ENCODE measurements at regions of chr1 and their contacts with region 1.

Region 1: DNA sequence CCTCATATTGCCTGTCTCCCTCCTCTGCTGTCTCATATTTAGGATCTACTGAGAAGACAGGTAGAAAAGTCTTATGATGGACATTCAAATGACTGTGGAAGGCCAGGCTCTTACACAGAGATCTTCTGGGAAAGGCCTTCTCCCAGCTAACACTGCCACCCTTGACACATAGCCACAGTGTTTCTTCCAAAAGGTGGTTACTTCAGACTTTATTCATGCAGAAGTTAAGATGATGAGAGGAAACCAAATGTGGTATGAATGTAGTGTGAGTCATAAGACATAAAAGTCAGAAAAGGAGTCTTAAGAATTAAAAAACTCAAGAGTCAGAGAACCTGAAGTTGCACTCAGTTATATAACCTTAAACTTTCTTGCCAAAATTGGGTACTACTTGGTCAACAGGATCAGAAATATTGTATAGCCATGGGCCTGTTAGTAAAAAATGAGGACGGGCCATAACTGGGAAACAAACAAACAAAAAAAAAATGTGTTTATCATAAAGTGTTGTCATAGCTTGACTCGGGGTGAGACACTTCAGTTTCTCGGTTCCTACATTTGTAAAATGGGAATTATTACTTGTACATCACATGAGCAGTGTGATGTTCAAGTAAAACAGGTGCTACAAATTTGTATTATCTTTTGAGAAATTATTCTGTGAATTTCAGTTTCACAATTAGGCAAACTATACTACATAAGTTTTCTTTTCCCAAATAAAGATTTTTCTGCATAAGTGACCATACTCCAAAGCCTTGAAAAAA is 1.2 kb upstream of the DENND1B start:
- DNase-seq: no peak
- ATAC-seq: peak; percentile 46
- H3K4me3 ChIP-seq: no peak overlapping the region
- H3K27ac ChIP-seq: peak overlapping the region; percentile 62
- H3K4me1 ChIP-seq: peaks cover 30% of the 10 kb centered on the region
- H3K27me3 ChIP-seq: no peaks in the 10 kb centered on the region; a peak in 1 of 4 replicates
- CTCF ChIP-seq: no peak
- EP300 ChIP-seq: peak; percentile 39 to 83; a peak in 2 of 4 replicates
- POLR2A ChIP-seq: no peak
- RAD21 ChIP-seq: no peak

Region 2: GRCh38 chr1:197649188-197649587 is 127.3 kb before region 1 on chr1:
- CTCF ChIA-PET with region 1: no interaction called
- POLR2A ChIA-PET with region 1: no interaction called
- RAD21 ChIA-PET with region 1: no interaction called
- SMC1A ChIA-PET with region 1: no interaction called
- in situ Hi-C with region 1: no loop called
- intact Hi-C with region 1: no loop called
- DNase-seq: no peak
- ATAC-seq: no peak
- H3K4me3 ChIP-seq: no peak overlapping the region
- H3K27ac ChIP-seq: no peak overlapping the region
- H3K4me1 ChIP-seq: no peaks in the 10 kb centered on the region
- H3K27me3 ChIP-seq: no peaks in the 10 kb centered on the region
- CTCF ChIP-seq: no peak
- EP300 ChIP-seq: no peak
- POLR2A ChIP-seq: no peak
- RAD21 ChIP-seq: no peak

Region 3: GRCh38 chr1:197675583-197676208 is 100.8 kb before region 1 on chr1:
- CTCF ChIA-PET with region 1: no interaction called
- POLR2A ChIA-PET with region 1: no interaction called
- RAD21 ChIA-PET with region 1: no interaction called
- SMC1A ChIA-PET with region 1: no interaction called
- in situ Hi-C with region 1: no loop called
- intact Hi-C with region 1: no loop called
- DNase-seq: no peak
- ATAC-seq: peak; percentile 34
- H3K4me3 ChIP-seq: no peak overlapping the region
- H3K27ac ChIP-seq: no peak overlapping the region
- H3K4me1 ChIP-seq: no peaks in the 10 kb centered on the region
- H3K27me3 ChIP-seq: no peaks in the 10 kb centered on the region
- CTCF ChIP-seq: no peak
- EP300 ChIP-seq: no peak
- POLR2A ChIP-seq: no peak
- RAD21 ChIP-seq: no peak

Region 4: DNA sequence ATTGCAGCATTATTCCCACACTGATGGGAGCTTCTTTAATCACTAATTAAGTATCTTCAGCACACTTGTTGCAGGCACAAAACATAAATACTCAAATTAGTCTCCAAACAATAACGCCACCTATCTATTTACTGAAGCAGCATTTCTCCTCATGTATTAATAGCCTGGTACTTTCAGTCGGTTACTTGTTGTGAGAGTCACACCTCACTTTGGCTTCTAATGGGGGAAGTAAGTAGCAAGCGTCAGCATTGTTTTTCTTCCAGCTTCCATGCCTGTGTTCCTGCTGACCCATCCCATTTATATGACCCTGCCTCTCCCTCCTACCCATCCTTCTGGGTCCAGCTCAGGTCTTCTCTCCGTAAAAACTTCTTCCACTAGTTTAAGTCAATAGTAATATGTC is 30.7 kb after region 1 on chr1:
- CTCF ChIA-PET with region 1: interaction called, 4 read pairs
- POLR2A ChIA-PET with region 1: interaction called, 4 read pairs
- RAD21 ChIA-PET with region 1: no interaction called
- SMC1A ChIA-PET with region 1: interaction called, 10 read pairs
- in situ Hi-C with region 1: no loop called
- intact Hi-C with region 1: no loop called
- DNase-seq: no peak
- ATAC-seq: peak; percentile 79
- H3K4me3 ChIP-seq: no peak overlapping the region
- H3K27ac ChIP-seq: no peak overlapping the region
- H3K4me1 ChIP-seq: peaks cover 5% of the 10 kb centered on the region; the same call in 1 of the 2 replicates
- H3K27me3 ChIP-seq: no peaks in the 10 kb centered on the region
- CTCF ChIP-seq: peak in 2 of 3 experiments; percentile 7; a peak in 1 of 6 replicates
- EP300 ChIP-seq: no peak
- POLR2A ChIP-seq: no peak
- RAD21 ChIP-seq: no peak

Region 5: DNA sequence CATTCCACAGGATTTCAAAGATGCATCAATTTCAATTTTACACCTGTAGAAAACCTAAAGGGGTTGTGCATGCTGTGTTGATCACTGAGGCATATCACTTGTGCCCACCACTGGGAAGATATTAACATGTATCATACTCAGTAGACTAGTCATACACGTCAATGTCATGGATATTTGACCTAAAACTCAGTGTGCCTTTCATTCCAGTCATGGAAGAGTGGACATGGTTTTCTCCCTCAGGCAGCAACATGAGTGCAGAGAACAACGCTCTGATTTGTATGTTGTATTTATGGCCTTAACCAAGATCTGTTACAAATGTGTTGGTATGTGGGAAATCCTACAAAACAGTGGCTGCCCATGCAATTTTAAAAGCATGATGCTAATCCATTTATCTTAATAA is 119.8 kb after region 1 on chr1:
- CTCF ChIA-PET with region 1: no interaction called
- POLR2A ChIA-PET with region 1: no interaction called
- RAD21 ChIA-PET with region 1: no interaction called
- SMC1A ChIA-PET with region 1: no interaction called
- in situ Hi-C with region 1: no loop called
- intact Hi-C with region 1: no loop called
- DNase-seq: no peak
- ATAC-seq: no peak
- H3K4me3 ChIP-seq: no peak overlapping the region
- H3K27ac ChIP-seq: no peak overlapping the region
- H3K4me1 ChIP-seq: no peaks in the 10 kb centered on the region
- H3K27me3 ChIP-seq: no peaks in the 10 kb centered on the region; a peak in 1 of 4 replicates
- CTCF ChIP-seq: no peak
- EP300 ChIP-seq: no peak
- POLR2A ChIP-seq: no peak
- RAD21 ChIP-seq: no peak